ENCODE measurements at regions of chr19 and their contacts with region 1.

Region 1: GRCh38 chr19:16382775-16383543 is 58.3 kb downstream of the KLF2 start:
- DNase-seq: peak; percentile 85
- ATAC-seq: peak; percentile 71
- H3K4me3 Mint-ChIP-seq: no peak overlapping the region
- H3K27ac Mint-ChIP-seq: peak overlapping the region; percentile 73
- H3K4me1 Mint-ChIP-seq: peaks cover 27% of the 10 kb centered on the region
- H3K27me3 Mint-ChIP-seq: no peaks in the 10 kb centered on the region

Region 2: GRCh38 chr19:16247353-16248182 is 135.4 kb before region 1 on chr19:
- CTCF ChIA-PET with region 1: interaction called, 137 read pairs
- DNase-seq: peak; percentile 87
- ATAC-seq: peak; percentile 94
- H3K4me3 Mint-ChIP-seq: no peak overlapping the region
- H3K27ac Mint-ChIP-seq: peak overlapping the region; percentile 0
- H3K4me1 Mint-ChIP-seq: peaks cover 20% of the 10 kb centered on the region
- H3K27me3 Mint-ChIP-seq: peaks cover 20% of the 10 kb centered on the region

Region 3: GRCh38 chr19:16262618-16263017 is 120.3 kb before region 1 on chr19:
- CTCF ChIA-PET with region 1: interaction called, 18 read pairs
- DNase-seq: no peak
- ATAC-seq: no peak
- H3K4me3 Mint-ChIP-seq: no peak overlapping the region
- H3K27ac Mint-ChIP-seq: peak overlapping the region; percentile 48
- H3K4me1 Mint-ChIP-seq: peaks cover 65% of the 10 kb centered on the region
- H3K27me3 Mint-ChIP-seq: peaks cover 28% of the 10 kb centered on the region

Region 4: DNA sequence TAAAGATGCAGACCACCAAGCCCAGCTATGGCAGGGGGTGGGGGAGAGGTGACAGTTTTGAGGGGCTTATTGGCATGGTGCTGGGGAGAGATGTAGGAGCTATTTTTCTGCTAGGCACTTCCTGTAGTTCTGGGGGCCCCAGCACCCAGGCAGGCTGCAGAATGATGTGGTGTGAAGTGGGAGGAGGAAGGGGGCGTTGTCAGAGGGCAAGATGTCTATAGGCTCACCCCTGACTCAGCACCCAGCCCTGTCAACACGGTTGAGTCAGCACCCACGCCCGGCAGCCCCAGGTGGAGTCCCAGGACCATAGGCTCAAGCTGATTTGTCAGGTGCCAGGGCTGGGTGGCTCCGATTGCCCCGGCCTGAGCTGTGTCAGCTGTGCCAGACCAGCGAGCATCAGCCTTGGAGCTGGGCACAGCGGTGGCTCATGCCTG is 52.6 kb before region 1 on chr19:
- CTCF ChIA-PET with region 1: interaction called, 449 read pairs
- DNase-seq: peak; percentile 98
- ATAC-seq: peak; percentile 83
- H3K4me3 Mint-ChIP-seq: peak overlapping the region; percentile 35
- H3K27ac Mint-ChIP-seq: peak overlapping the region; percentile 88
- H3K4me1 Mint-ChIP-seq: peaks cover 66% of the 10 kb centered on the region
- H3K27me3 Mint-ChIP-seq: peaks cover 29% of the 10 kb centered on the region

Region 5: GRCh38 chr19:16371540-16371986 is 11.4 kb before region 1 on chr19:
- CTCF ChIA-PET with region 1: interaction called, 62 read pairs
- DNase-seq: peak; percentile 96
- ATAC-seq: peak; percentile 63
- H3K4me3 Mint-ChIP-seq: peak overlapping the region; percentile 57
- H3K27ac Mint-ChIP-seq: no peak overlapping the region
- H3K4me1 Mint-ChIP-seq: peaks cover 38% of the 10 kb centered on the region
- H3K27me3 Mint-ChIP-seq: peaks cover 10% of the 10 kb centered on the region

Measured in activated CD8-positive, alpha-beta memory T cell treated with anti-CD3 and anti-CD28 coated beads, Interleukin-2, amount 10 ng/mL, durations not matched to agents 7 days and 5 days (primary cell).